AG04449 (cell line): ENCODE measurements at regions of chr6 and their contacts with region 1.

Region 1: DNA sequence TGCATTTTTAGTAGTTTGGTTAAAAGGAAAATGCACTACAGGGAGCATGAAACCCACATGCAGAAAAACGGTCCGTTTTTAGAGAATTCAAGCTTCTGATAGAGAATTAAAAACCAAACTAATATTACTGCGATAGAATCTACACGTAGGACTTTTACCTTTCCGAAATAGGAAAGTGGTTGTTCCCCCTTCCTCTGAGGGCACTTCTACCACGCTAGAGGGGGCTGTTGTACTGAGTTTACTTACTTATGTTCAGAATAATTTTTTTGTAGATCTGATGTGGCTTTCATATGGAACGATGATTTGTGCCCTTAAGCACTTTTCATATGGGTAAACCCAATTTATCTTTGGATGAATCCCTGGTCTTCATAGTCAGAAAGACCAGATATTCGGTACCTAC is 264.3 kb upstream of the PLN start:
- DNase-seq: no peak
- H3K4me3 ChIP-seq: no peak overlapping the region
- CTCF ChIP-seq: peak; percentile 60

Region 2: GRCh38 chr6:118263921-118264486 is 19.8 kb before region 1 on chr6:
- CTCF ChIA-PET with region 1: interaction called, 24 read pairs
- POLR2A ChIA-PET with region 1: no interaction called
- DNase-seq: no peak
- H3K4me3 ChIP-seq: no peak overlapping the region
- CTCF ChIP-seq: no peak

Region 3: DNA sequence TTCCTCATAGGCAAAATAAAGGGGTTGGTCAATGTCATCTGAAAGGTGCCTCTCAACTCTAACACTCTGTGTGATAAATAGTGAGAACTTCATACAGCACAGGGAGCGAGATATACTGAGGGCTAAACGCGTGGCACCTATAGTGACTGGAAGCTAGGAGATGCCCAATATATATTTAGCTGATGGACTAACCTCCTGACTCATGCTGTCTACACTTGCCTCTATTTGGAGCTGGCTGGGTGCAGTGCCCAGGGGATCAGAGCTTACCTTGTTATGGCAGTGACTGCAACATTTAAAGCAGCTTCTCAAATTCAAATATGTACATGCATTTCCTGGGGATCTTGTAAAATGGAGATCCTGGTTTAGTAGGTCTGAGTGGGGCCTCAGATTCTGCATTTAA is 152.7 kb after region 1 on chr6:
- CTCF ChIA-PET with region 1: no interaction called
- POLR2A ChIA-PET with region 1: no interaction called
- DNase-seq: no peak
- H3K4me3 ChIP-seq: no peak overlapping the region
- CTCF ChIP-seq: no peak

Region 4: GRCh38 chr6:118546164-118546879 is 262.6 kb after region 1 on chr6:
- CTCF ChIA-PET with region 1: interaction called, 32 read pairs
- POLR2A ChIA-PET with region 1: no interaction called
- DNase-seq: no peak
- H3K4me3 ChIP-seq: no peak overlapping the region
- CTCF ChIP-seq: no peak

Region 5: DNA sequence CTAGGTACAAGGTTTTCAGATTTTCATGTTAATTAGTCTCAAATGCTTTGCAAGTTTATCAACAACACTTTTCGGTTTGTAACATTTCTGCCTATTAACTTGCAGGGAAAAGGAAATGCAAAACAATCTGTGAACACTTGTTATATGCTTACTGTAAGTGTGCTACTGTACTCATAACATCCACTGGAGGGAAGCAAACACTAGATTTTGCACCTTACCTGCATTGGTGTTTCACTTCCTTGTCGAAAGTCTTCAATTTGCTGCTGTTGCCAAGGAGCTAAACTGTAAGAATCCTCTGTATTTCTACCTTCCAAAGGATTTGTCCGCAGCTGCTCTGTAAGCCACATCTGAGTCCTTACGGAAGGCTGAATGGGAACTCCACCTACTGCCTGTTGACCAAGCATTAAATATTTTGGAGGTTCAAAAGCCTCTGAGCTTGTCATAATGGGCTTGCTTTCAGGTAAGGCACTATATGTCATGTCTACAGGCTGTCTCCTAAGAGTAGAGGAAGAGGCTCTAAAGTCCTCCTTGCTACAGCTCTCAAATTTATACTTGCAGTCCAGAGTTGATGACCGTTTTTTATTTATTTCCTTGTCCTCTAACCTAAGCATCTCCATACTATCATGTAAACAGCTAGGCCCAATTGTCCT is 281.7 kb after region 1 on chr6:
- CTCF ChIA-PET with region 1: interaction called, 15 read pairs
- POLR2A ChIA-PET with region 1: no interaction called
- DNase-seq: no peak
- H3K4me3 ChIP-seq: no peak overlapping the region
- CTCF ChIP-seq: peak; percentile 22

Region 6: DNA sequence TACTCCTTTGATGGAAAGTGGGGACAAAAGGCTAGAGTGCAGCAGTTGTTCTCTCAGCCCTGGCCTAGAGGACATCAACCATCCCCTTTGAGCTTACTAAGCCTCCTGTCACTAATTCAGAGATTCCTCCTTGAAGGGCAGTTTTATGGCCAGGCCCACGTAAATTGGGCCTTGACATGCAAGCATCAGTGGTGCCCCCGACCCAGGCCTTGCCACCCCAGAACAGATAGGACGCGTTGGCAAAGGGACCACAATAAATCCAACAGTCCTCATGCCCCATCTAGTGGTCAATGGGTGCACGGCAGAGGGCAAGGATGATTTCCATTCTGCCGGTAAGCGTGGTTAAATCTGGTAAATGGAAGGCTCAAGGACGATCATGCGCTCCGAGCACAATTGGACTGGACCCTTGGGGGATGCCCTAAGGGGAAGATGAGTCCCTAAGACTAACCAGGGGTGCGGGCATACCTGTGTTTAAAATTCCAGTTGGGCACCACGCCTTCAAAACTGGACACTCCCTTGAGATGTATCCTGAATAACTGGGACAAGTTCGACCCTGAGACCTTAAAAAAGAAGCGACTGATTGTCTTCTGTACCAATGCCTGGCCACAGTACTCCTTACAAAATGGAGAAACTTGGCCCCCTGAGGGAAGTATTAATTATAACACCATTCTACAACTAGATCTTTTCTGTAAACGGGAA is 335.1 kb after region 1 on chr6:
- CTCF ChIA-PET with region 1: interaction called, 14 read pairs
- POLR2A ChIA-PET with region 1: no interaction called
- DNase-seq: no peak
- H3K4me3 ChIP-seq: no peak overlapping the region
- CTCF ChIP-seq: peak; percentile 87

Region 7: GRCh38 chr6:118800394-118801071 is 516.8 kb after region 1 on chr6:
- CTCF ChIA-PET with region 1: interaction called, 18 read pairs
- POLR2A ChIA-PET with region 1: no interaction called
- DNase-seq: peak; percentile 50
- H3K4me3 ChIP-seq: no peak overlapping the region; the same call in 1 of the 2 replicates
- CTCF ChIP-seq: peak; percentile 80